Activated B cell treated with CpG ODN at 0.5 μM for 24 hours (primary cell): ENCODE measurements at regions of chr17 and their contacts with region 1.

Region 1: GRCh38 chr17:76397687-76398487 is 13.5 kb downstream of the SPHK1 start:
- DNase-seq: peak; percentile 79
- ATAC-seq: peak; percentile 93
- H3K4me3 Mint-ChIP-seq: no peak overlapping the region
- H3K27ac Mint-ChIP-seq: no peak overlapping the region
- H3K4me1 Mint-ChIP-seq: peaks cover 3% of the 10 kb centered on the region
- H3K27me3 Mint-ChIP-seq: no peaks in the 10 kb centered on the region
- CTCF ChIP-seq: peak; percentile 98

Region 2: GRCh38 chr17:76353599-76354316 is 44.1 kb before region 1 on chr17 and contains the start of gene PRPSAP1:
- CTCF ChIA-PET with region 1: interaction called, 12 read pairs
- POLR2A ChIA-PET with region 1: interaction called, 5 read pairs
- intact Hi-C with region 1: no loop called
- DNase-seq: peak; percentile 83
- ATAC-seq: peak; percentile 93
- H3K4me3 Mint-ChIP-seq: peak within 1 kb of the TSS; percentile 94
- H3K27ac Mint-ChIP-seq: peak within 1 kb of the TSS; percentile 98
- H3K4me1 Mint-ChIP-seq: peaks cover 23% of the 10 kb centered on the region
- H3K27me3 Mint-ChIP-seq: no peaks in the 10 kb centered on the region
- CTCF ChIP-seq: no peak
- total RNA-seq, gene PRPSAP1: 26.7 and 27.1 TPM in 2 replicates

Region 3: DNA sequence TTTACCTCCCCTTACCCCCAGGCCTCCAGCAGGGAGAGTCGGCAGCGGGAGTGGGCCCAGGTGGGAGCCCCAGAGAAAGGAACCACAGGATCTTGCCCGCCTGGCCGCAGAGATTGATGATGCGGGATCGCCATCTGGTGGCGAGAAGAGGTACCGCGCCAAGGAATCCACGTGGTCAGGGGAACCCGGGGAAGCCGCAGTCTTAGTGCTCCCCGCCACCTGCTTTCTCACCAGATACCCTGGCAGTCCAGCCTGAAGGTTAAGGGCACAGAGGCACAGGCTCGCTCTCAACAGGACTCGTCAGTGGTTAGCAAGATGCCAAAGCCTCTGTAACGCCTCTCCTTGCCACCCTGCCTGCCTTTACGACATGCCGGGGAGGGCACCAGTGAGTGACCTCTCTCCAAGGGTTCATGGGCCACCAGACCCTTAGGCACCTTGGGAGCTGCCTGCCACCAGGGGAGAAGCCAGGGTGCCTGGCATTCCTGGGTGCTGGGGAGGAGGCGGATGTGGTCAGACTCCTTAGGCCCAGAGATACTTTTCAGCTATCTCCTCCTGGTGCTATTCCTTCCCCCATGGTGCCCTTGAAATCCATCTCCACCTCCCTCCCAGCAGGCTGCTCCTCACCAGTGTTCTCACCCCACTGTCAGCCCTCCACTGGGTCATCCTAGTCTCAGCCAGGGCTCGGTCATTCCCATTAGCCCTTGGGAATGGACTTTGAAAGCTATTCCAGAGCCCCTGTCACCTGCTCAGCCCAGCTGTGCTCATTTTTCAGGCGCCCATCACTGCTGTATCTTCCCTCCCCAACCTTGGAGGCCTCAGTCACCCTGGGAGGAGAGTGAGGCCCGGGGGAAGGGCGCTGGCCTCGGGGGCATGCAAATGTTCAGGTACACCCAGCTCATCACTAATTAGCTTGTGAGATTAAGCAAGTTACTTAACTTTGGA is 108.8 kb after region 1 on chr17:
- CTCF ChIA-PET with region 1: interaction called, 28 read pairs
- POLR2A ChIA-PET with region 1: no interaction called
- intact Hi-C with region 1: no loop called
- DNase-seq: peak; percentile 93
- ATAC-seq: peak; percentile 85
- H3K4me3 Mint-ChIP-seq: no peak overlapping the region
- H3K27ac Mint-ChIP-seq: peak overlapping the region; percentile 50
- H3K4me1 Mint-ChIP-seq: peaks cover 26% of the 10 kb centered on the region
- H3K27me3 Mint-ChIP-seq: peaks cover 4% of the 10 kb centered on the region
- CTCF ChIP-seq: peak; percentile 66

Region 4: DNA sequence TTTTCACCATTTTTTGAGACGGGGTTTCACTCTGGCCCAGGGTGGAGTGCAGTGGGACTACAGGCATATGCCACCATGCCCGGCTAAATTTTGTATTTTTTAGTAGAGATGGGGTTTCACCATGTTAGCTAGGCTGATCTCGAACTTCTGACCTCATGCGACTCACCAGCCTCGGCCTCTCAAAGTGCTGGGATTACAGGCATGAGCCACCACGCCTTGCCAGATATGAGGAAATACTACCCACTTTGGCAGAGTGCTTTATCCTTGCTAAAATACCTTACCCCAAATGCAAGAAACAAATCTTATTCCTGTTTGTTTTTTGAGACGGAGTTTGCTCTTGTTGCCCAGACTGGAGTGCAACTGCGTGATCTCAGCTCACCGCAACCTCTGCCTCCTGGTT is 407.4 kb after region 1 on chr17:
- CTCF ChIA-PET with region 1: no interaction called
- POLR2A ChIA-PET with region 1: no interaction called
- intact Hi-C with region 1: no loop called
- DNase-seq: no peak
- ATAC-seq: no peak
- H3K4me3 Mint-ChIP-seq: no peak overlapping the region
- H3K27ac Mint-ChIP-seq: no peak overlapping the region
- H3K4me1 Mint-ChIP-seq: no peaks in the 10 kb centered on the region
- H3K27me3 Mint-ChIP-seq: no peaks in the 10 kb centered on the region
- CTCF ChIP-seq: no peak